Breast epithelium (tissue), 4 donors: ENCODE measurements at regions of chr4 and their contacts with region 1.

Region 1: GRCh38 chr4:87853108-87853507 is 20.3 kb downstream of the MEPE start:
- DNase-seq: no peak
- H3K4me3 ChIP-seq: no peak overlapping the region
- H3K27ac ChIP-seq: no peak overlapping the region
- H3K4me1 ChIP-seq: no peaks in the 10 kb centered on the region
- H3K27me3 ChIP-seq: no peaks in the 10 kb centered on the region
- CTCF ChIP-seq: peak in 2 of 3 donors; percentile 46 to 47
- POLR2A ChIP-seq: no peak

Region 2: GRCh38 chr4:87973283-87974169 is 120.4 kb after region 1 on chr4:
- intact Hi-C with region 1: loop called (anchors 5 kb)
- DNase-seq: peak in 1 of 2 donors; percentile 45
- H3K4me3 ChIP-seq: no peak overlapping the region
- H3K27ac ChIP-seq: peak overlapping the region; percentile 26 to 57
- H3K4me1 ChIP-seq: no peaks in the 10 kb centered on the region
- H3K27me3 ChIP-seq: no peaks in the 10 kb centered on the region
- CTCF ChIP-seq: peak; percentile 56 to 74 (median 60)
- POLR2A ChIP-seq: no peak